Common myeloid progenitor, CD34-positive (primary cell): ENCODE measurements at regions of chr2 and their contacts with region 1.

Region 1: GRCh38 chr2:148538375-148538774 is 106.2 kb upstream of the EPC2 start:
- DNase-seq: peak in 1 of 3 donors; percentile 19
- H3K4me3 ChIP-seq: no peak overlapping the region
- H3K27ac ChIP-seq: no peak overlapping the region
- H3K4me1 ChIP-seq: peaks cover 0 to 45% (median 29%) of the 10 kb centered on the region in 4 experiments
- H3K27me3 ChIP-seq: no peaks in the 10 kb centered on the region

Region 2: DNA sequence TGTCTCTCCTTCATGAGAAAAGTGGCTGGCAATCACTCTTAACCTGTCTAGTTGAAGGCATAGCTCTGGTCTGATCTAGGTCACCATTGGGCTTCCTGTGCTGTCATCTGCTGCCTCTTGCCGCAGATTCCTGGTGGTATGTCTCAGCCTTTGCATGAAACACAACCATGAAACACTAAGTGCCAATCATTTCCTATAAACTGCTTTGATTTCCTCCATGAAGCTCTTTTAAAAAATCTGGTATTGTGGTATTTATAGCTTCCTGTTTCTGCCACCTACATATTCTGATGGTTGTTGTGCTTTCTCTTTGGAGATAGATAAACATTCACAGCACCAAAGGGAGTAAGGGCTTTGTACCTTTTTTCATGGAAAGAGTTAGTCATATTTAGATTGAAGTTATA is 13.9 kb before region 1 on chr2:
- CTCF ChIA-PET with region 1: interaction called, 13 read pairs
- POLR2A ChIA-PET with region 1: no interaction called
- DNase-seq: peak in 2 of 3 donors; percentile 78 to 82
- H3K4me3 ChIP-seq: no peak overlapping the region
- H3K27ac ChIP-seq: no peak overlapping the region
- H3K4me1 ChIP-seq: peaks cover 2 to 33% (median 13%) of the 10 kb centered on the region in 4 experiments
- H3K27me3 ChIP-seq: peaks cover 0 to 6% (median 0%) of the 10 kb centered on the region in 5 experiments

Region 3: DNA sequence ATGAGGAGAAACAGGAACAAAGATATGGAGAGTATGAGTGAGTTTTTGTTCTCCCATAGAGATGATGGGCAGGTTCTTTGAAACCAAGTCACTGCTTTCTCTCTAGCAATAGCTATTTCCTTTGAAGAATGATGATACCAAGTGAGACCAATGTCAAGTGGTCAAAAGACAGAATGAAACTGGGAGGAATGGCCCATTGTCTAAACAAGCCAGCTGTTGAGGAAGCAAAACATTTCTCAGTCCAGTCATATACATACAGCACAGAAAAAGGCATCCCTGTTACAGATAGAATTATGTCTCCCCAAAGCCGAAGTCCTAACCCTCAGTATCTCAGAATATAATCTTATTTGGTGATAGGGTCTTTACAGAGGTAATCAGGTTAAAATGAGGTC is 40.1 kb after region 1 on chr2:
- CTCF ChIA-PET with region 1: no interaction called
- POLR2A ChIA-PET with region 1: no interaction called
- DNase-seq: no peak
- H3K4me3 ChIP-seq: no peak overlapping the region
- H3K27ac ChIP-seq: no peak overlapping the region
- H3K4me1 ChIP-seq: no peaks in the 10 kb centered on the region
- H3K27me3 ChIP-seq: no peaks in the 10 kb centered on the region

Region 4: GRCh38 chr2:148955798-148956197 is 417.4 kb after region 1 on chr2:
- CTCF ChIA-PET with region 1: no interaction called
- POLR2A ChIA-PET with region 1: no interaction called
- DNase-seq: no peak
- H3K4me3 ChIP-seq: no peak overlapping the region
- H3K27ac ChIP-seq: no peak overlapping the region
- H3K4me1 ChIP-seq: peaks cover 4 to 24% (median 12%) of the 10 kb centered on the region in 4 experiments
- H3K27me3 ChIP-seq: no peaks in the 10 kb centered on the region